ENCODE measurements at regions of chr2 and their contacts with region 1.

Region 1: GRCh38 chr2:44291281-44292248 is 16.3 kb downstream of the SLC3A1 start:
- DNase-seq: no peak
- ATAC-seq: peak; percentile 69 to 79
- H3K4me3 ChIP-seq: no peak overlapping the region
- H3K27ac ChIP-seq: no peak overlapping the region
- H3K4me1 ChIP-seq: peaks cover 4% of the 10 kb centered on the region
- H3K27me3 ChIP-seq: no peaks in the 10 kb centered on the region

Region 2: GRCh38 chr2:43745457-43745856 is 546.1 kb before region 1 on chr2:
- intact Hi-C with region 1: no loop called
- DNase-seq: no peak
- ATAC-seq: no peak
- H3K4me3 ChIP-seq: no peak overlapping the region
- H3K27ac ChIP-seq: no peak overlapping the region
- H3K4me1 ChIP-seq: peaks cover 3% of the 10 kb centered on the region
- H3K27me3 ChIP-seq: no peaks in the 10 kb centered on the region

Region 3: DNA sequence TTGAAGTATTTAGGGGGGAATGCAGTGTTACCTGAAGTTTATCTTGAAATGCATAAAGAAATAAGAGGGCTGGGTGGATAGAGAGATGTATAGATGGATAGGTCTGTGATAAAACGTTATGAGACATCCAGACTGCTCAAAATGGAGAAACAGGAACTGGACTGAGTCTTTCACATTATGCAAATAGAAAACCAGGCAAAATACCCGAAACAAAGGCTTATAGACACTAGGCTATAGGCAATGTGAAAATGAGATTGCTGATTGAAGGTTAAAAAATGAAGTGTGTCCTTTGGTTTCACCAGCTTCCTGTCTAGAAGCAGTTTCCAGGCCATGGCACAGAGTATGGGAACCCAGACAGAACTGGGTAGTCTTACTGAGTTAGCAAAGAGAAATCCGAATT is 41.2 kb before region 1 on chr2:
- intact Hi-C with region 1: loop called in 1 of 4 experiments (anchors 5 kb)
- DNase-seq: no peak
- ATAC-seq: no peak
- H3K4me3 ChIP-seq: no peak overlapping the region
- H3K27ac ChIP-seq: no peak overlapping the region
- H3K4me1 ChIP-seq: no peaks in the 10 kb centered on the region
- H3K27me3 ChIP-seq: no peaks in the 10 kb centered on the region

Region 4: GRCh38 chr2:44510246-44510645 is 218.7 kb after region 1 on chr2:
- intact Hi-C with region 1: no loop called
- DNase-seq: no peak
- ATAC-seq: no peak
- H3K4me3 ChIP-seq: no peak overlapping the region
- H3K27ac ChIP-seq: no peak overlapping the region
- H3K4me1 ChIP-seq: no peaks in the 10 kb centered on the region
- H3K27me3 ChIP-seq: no peaks in the 10 kb centered on the region